ENCODE measurements at regions of chr13 and their contacts with region 1.

Region 1: GRCh38 chr13:102870677-102871415 is 25.0 kb downstream of the ERCC5 start:
- DNase-seq: peak; percentile 33 to 59
- H3K4me3 ChIP-seq: no peak overlapping the region
- H3K27ac ChIP-seq: no peak overlapping the region
- H3K4me1 ChIP-seq: peaks cover 0 to 5% (median 1%) of the 10 kb centered on the region in 4 experiments; a peak in 3 of 7 replicates
- H3K27me3 ChIP-seq: no peaks in the 10 kb centered on the region
- CTCF ChIP-seq: peak; percentile 63 to 71 (median 67)
- EP300 ChIP-seq: no peak
- POLR2A ChIP-seq: no peak
- RAD21 ChIP-seq: peak; percentile 86 to 90

Region 2: DNA sequence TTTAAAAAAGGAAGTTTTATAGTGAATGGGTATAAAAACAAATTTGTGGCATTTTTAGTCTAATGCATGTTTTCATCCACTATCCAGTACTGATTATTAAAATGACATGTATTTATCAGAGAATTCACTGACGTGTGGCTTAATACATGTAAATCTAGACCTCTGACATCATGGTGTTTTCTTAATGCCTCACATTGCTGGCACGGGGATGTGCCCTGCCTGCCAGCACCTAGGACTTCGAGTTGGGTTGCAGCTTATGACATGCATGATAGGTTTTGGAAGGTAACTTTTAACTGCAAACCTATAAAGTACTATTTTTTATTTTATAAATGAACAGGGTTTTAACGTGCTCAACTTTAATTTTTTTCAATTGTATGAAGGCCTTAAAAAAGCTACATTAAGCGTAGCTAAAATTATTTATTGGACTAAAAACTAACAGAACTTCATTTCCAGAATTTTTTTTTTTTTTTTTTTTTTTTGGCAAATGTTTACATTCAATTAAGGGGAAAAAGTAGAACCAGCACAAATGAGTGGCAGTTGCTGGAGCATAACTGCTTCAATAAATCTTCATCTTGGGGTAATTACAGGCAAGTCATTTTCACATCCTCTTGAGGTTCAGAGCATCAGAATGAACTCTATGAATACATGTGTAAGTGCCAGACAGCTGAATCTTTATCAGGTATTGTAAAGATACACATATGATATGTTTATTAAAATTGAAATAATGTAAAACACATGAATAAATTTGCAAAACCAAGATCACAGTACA is 192.3 kb before region 1 on chr13:
- CTCF ChIA-PET with region 1: no interaction called
- POLR2A ChIA-PET with region 1: no interaction called
- DNase-seq: no peak
- H3K4me3 ChIP-seq: no peak overlapping the region
- H3K27ac ChIP-seq: no peak overlapping the region
- H3K4me1 ChIP-seq: no peaks in the 10 kb centered on the region
- H3K27me3 ChIP-seq: no peaks in the 10 kb centered on the region
- CTCF ChIP-seq: no peak
- EP300 ChIP-seq: no peak
- POLR2A ChIP-seq: no peak
- RAD21 ChIP-seq: no peak

Region 3: GRCh38 chr13:102892503-102892902 is 21.7 kb after region 1 on chr13:
- CTCF ChIA-PET with region 1: interaction called, 23 read pairs
- POLR2A ChIA-PET with region 1: no interaction called
- DNase-seq: no peak
- H3K4me3 ChIP-seq: no peak overlapping the region
- H3K27ac ChIP-seq: no peak overlapping the region
- H3K4me1 ChIP-seq: no peaks in the 10 kb centered on the region
- H3K27me3 ChIP-seq: no peaks in the 10 kb centered on the region
- CTCF ChIP-seq: no peak
- EP300 ChIP-seq: no peak
- POLR2A ChIP-seq: no peak
- RAD21 ChIP-seq: no peak

Region 4: GRCh38 chr13:102897371-102898138 is 26.7 kb after region 1 on chr13:
- CTCF ChIA-PET with region 1: interaction called, 28 read pairs
- POLR2A ChIA-PET with region 1: interaction called, 3 read pairs
- DNase-seq: no peak
- H3K4me3 ChIP-seq: no peak overlapping the region
- H3K27ac ChIP-seq: no peak overlapping the region
- H3K4me1 ChIP-seq: no peaks in the 10 kb centered on the region
- H3K27me3 ChIP-seq: no peaks in the 10 kb centered on the region
- CTCF ChIP-seq: no peak
- EP300 ChIP-seq: no peak
- POLR2A ChIP-seq: no peak
- RAD21 ChIP-seq: no peak

Region 5: DNA sequence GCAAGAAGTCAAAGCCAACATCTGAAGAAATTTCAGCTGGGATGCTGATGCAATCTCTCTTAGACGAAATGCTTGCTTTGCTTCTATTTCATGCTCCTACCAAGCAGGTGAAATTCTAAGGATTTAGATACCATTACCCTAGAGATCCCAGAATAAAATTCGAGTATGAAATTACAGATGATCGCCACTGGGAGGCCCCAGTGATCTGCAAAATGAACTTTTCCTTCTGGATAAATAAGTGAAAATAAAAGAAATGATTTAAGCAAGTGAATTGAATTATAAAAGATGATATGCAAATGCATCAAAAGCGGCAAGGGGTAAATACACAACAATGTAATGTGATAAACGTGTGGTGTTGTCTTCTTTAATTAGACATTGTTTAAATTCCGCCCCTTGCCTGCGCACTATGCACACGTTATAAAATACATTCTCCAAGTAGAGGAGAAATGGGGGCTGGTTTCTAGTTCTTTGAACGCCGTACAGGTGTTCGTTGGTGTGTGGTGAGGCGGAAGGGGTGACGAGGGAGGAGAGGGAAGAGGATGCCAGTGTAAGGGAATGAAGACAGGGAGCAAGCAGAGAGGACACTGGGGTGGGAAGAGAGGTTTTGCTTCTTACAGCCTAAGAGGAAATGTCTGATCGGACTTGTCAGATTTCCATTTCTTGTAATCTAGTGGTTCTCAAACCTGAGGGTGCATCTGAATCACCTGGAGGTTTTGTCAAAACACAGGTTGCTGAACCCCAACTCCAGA is 33.0 kb after region 1 on chr13:
- CTCF ChIA-PET with region 1: interaction called, 28 read pairs
- POLR2A ChIA-PET with region 1: interaction called, 3 read pairs
- DNase-seq: no peak
- H3K4me3 ChIP-seq: no peak overlapping the region
- H3K27ac ChIP-seq: no peak overlapping the region
- H3K4me1 ChIP-seq: peaks cover 0 to 4% (median 0%) of the 10 kb centered on the region in 4 experiments; a peak in 1 of 7 replicates
- H3K27me3 ChIP-seq: no peaks in the 10 kb centered on the region
- CTCF ChIP-seq: peak in 2 of 3 experiments; percentile 25 to 46; a peak in 2 of 4 replicates
- EP300 ChIP-seq: no peak
- POLR2A ChIP-seq: no peak
- RAD21 ChIP-seq: peak; percentile 68

Measured in H1 (cell line).